Tibial artery (tissue), 4 donors: ENCODE measurements at regions of chr11 and their contacts with region 1.

Region 1: GRCh38 chr11:69115586-69116560 is 39.9 kb upstream of the SMIM38 start:
- DNase-seq: peak in 1 of 2 donors; percentile 78
- H3K4me3 ChIP-seq: no peak overlapping the region
- H3K27ac ChIP-seq: no peak overlapping the region
- H3K4me1 ChIP-seq: peaks cover 0 to 16% (median 12%) of the 10 kb centered on the region in 4 donors
- H3K27me3 ChIP-seq: no peaks in the 10 kb centered on the region
- CTCF ChIP-seq: no peak

Region 2: DNA sequence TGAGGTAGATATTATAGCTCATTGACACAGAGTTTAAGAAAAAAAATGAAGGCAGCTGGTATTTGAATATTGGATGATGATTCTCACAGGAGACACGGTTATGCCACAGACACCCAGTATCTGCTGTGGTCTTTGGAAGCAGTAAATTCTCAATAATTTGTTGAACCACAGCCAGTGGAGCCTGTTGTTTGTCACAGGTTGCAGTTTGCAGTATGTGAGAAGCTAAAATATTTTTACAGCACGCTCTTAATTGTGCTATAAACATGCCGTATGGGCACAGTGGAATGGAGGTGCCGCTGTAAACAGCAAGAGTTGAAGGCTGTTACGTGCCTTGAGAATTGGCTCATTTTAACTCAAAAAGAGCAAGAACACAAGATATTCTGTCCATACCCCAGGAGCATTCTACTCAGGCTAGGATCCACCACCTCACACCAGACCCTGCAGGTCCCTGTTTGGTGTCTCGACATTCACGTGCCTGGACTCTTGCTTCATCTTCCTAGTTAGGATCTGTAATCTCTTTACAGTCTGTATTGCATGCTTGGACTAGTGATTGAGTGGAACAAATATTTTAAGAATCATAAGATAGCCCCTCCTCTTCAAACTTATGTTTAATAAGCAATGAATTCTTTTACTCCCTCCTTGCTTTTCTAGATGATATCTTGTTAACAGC is 526.2 kb before region 1 on chr11:
- intact Hi-C with region 1: no loop called
- DNase-seq: no peak
- H3K4me3 ChIP-seq: no peak overlapping the region
- H3K27ac ChIP-seq: no peak overlapping the region
- H3K4me1 ChIP-seq: no peaks in the 10 kb centered on the region
- H3K27me3 ChIP-seq: no peaks in the 10 kb centered on the region
- CTCF ChIP-seq: no peak

Region 3: GRCh38 chr11:69192301-69192721 is 76.4 kb after region 1 on chr11:
- intact Hi-C with region 1: no loop called
- DNase-seq: no peak
- H3K4me3 ChIP-seq: no peak overlapping the region
- H3K27ac ChIP-seq: no peak overlapping the region
- H3K4me1 ChIP-seq: no peaks in the 10 kb centered on the region
- H3K27me3 ChIP-seq: peaks cover 0 to 15% of the 10 kb centered on the region in 2 donors
- CTCF ChIP-seq: no peak

Region 4: GRCh38 chr11:69296890-69297786 is 181.3 kb after region 1 on chr11:
- intact Hi-C with region 1: loop called (anchors 10 kb)
- DNase-seq: peak; percentile 95 to 96
- H3K4me3 ChIP-seq: peak overlapping the region; percentile 24 to 28
- H3K27ac ChIP-seq: peak overlapping the region; percentile 34 to 63
- H3K4me1 ChIP-seq: peaks cover 10 to 55% (median 46%) of the 10 kb centered on the region in 4 donors
- H3K27me3 ChIP-seq: no peaks in the 10 kb centered on the region
- CTCF ChIP-seq: no peak